Activated T-helper 1 cell treated with anti-CD3 and anti-CD28 coated beads, Interleukin-12 subunit alpha, Interleukin-12 subunit beta, Interleukin-2, Interleukin-4 antibody, amounts not matched to agents 30 ng/mL and 10 ng/mL and 1 ng/mL, durations not matched to agents 14 hours and 24 hours and 36 hours (primary cell): ENCODE measurements at regions of chr4 and their contacts with region 1.

Region 1: GRCh38 chr4:7101692-7102515 is 34.0 kb upstream of the GRPEL1 start:
- DNase-seq: peak; percentile 29
- H3K4me3 Mint-ChIP-seq: peak overlapping the region; percentile 89
- H3K27ac Mint-ChIP-seq: no peak overlapping the region
- H3K4me1 Mint-ChIP-seq: peaks cover 14% of the 10 kb centered on the region
- H3K27me3 Mint-ChIP-seq: peaks cover 15% of the 10 kb centered on the region

Region 2: GRCh38 chr4:6269616-6270511 is 832.0 kb before region 1 on chr4 and contains the start of gene WFS1:
- intact Hi-C with region 1: loop called (anchors 1 kb)
- DNase-seq: peak; percentile 96
- H3K4me3 Mint-ChIP-seq: peak within 1 kb of the TSS; percentile 81
- H3K27ac Mint-ChIP-seq: no peak within 1 kb of the TSS
- H3K4me1 Mint-ChIP-seq: peaks cover 18% of the 10 kb centered on the region
- H3K27me3 Mint-ChIP-seq: peaks cover 34% of the 10 kb centered on the region
- total RNA-seq, gene WFS1: 5.7 and 9.3 TPM in 2 replicates

Region 3: GRCh38 chr4:6574747-6575502 is 527.0 kb before region 1 on chr4 and contains the start of gene MAN2B2:
- intact Hi-C with region 1: loop called (anchors 1 kb)
- DNase-seq: peak; percentile 83
- H3K4me3 Mint-ChIP-seq: peak within 1 kb of the TSS; percentile 87
- H3K27ac Mint-ChIP-seq: peak within 1 kb of the TSS; percentile 71
- H3K4me1 Mint-ChIP-seq: no peaks in the 10 kb centered on the region
- H3K27me3 Mint-ChIP-seq: peaks cover 5% of the 10 kb centered on the region
- total RNA-seq, gene MAN2B2: 13.9 and 14.0 TPM in 2 replicates

Region 4: GRCh38 chr4:6591313-6591712 is 510.6 kb before region 1 on chr4:
- intact Hi-C with region 1: no loop called
- DNase-seq: no peak
- H3K4me3 Mint-ChIP-seq: no peak overlapping the region
- H3K27ac Mint-ChIP-seq: peak overlapping the region; percentile 42
- H3K4me1 Mint-ChIP-seq: no peaks in the 10 kb centered on the region
- H3K27me3 Mint-ChIP-seq: no peaks in the 10 kb centered on the region

Region 5: DNA sequence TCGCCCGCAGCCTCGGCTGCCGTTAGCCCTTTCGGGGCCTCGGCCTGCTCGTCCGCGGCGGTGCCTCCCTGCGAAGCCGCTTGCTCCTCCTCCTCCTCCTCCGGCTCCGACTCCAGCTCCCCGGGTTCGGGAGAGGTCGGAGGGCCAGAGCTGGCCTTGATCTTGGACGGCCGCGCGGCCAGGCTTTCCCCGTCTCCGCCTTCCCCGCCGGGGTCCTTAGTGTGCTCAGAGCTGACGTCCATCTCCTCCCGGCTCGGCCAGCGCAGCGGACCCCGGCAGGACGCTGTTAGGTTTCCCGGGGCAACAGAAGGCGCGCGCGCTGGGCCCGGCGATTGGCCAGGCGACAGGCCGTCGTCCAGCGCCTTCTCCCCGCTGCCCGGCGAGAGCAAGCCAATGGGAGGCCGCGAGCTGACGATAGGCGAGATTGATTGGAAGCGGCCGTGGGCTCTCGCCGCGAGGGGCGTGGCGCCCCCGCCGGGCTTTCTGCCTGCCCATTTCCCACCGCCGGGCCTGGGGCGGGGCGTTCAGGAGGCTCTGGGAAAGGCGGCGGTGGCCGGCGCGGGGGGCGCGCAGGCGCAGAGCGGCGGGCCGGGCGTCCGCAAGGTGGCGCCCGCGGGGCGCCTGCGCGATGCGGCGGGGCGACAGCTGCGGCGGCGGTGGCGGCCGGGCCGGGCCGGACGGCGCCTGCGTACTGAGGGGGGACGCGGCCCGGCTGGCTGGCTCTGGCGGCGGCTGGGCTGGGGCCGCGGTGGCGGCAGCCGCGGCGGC is 59.0 kb before region 1 on chr4 and contains the start of gene TADA2B:
- intact Hi-C with region 1: loop called (anchors 1 kb)
- DNase-seq: peak; percentile 93
- H3K4me3 Mint-ChIP-seq: peak within 1 kb of the TSS; percentile 95
- H3K27ac Mint-ChIP-seq: peak within 1 kb of the TSS; percentile 86
- H3K4me1 Mint-ChIP-seq: peaks cover 48% of the 10 kb centered on the region
- H3K27me3 Mint-ChIP-seq: peaks cover 8% of the 10 kb centered on the region
- total RNA-seq, gene TADA2B: 15.2 and 16.8 TPM in 2 replicates